SK-N-SH (cell line): ENCODE measurements at regions of chr2 and their contacts with region 1.

Region 1: GRCh38 chr2:241315093-241315878 is at the start of gene HDLBP:
- DNase-seq: peak; percentile 99
- H3K4me3 ChIP-seq: peak within 1 kb of the TSS; percentile 96 to 97
- H3K27ac ChIP-seq: peak within 1 kb of the TSS; percentile 99 to 100
- H3K4me1 ChIP-seq: peaks cover 22 to 25% of the 10 kb centered on the region in 2 experiments; a peak in 3 of 4 replicates
- H3K27me3 ChIP-seq: no peaks in the 10 kb centered on the region
- CTCF ChIP-seq: peak; percentile 60
- EP300 ChIP-seq: 0 out of 4 replicates have a peak, but pooled peaks of 1 of the 2 experiments have one; percentile 19
- RAD21 ChIP-seq: peak; percentile 19; the same call in 1 of the 2 replicates
- polyA plus RNA-seq, gene HDLBP: 211 and 263 TPM in 2 replicates

Region 2: DNA sequence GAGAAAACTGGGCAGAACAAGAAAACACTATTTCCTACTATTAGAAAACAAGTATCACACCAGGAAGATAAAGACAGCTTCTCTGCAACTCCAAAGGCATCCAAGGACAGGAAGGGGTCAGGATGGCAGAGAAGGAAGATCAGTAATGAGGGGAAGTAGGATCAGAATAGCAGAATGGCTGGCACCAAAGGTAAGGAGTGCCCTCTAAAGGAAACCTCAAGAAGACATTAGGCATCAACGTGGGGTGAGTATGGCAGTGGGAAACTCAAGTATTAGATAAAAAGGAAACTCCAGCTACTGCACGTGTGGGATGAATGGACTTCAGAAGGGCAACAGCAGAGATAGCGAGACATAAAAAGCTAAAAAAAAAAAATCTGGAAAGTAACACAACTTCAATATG is 25.7 kb before region 1 on chr2:
- CTCF ChIA-PET with region 1: interaction called, 29 read pairs
- POLR2A ChIA-PET with region 1: interaction called, 5 read pairs
- DNase-seq: no peak
- H3K4me3 ChIP-seq: no peak overlapping the region
- H3K27ac ChIP-seq: no peak overlapping the region
- H3K4me1 ChIP-seq: peaks cover 5 to 10% of the 10 kb centered on the region in 2 experiments; a peak in 2 of 4 replicates
- H3K27me3 ChIP-seq: no peaks in the 10 kb centered on the region
- CTCF ChIP-seq: peak; percentile 11; the same call in 1 of the 2 replicates
- EP300 ChIP-seq: no peak
- RAD21 ChIP-seq: no peak

Region 3: GRCh38 chr2:241302759-241303651 is 12.3 kb before region 1 on chr2:
- CTCF ChIA-PET with region 1: interaction called, 22 read pairs
- POLR2A ChIA-PET with region 1: interaction called, 24 read pairs
- DNase-seq: peak; percentile 14
- H3K4me3 ChIP-seq: no peak overlapping the region
- H3K27ac ChIP-seq: peak overlapping the region in 1 of 2 experiments; percentile 85; a peak in 2 of 4 replicates
- H3K4me1 ChIP-seq: peaks cover 0 to 36% of the 10 kb centered on the region in 2 experiments; a peak in 1 of 4 replicates
- H3K27me3 ChIP-seq: no peaks in the 10 kb centered on the region
- CTCF ChIP-seq: no peak
- EP300 ChIP-seq: no peak
- RAD21 ChIP-seq: no peak

Region 4: DNA sequence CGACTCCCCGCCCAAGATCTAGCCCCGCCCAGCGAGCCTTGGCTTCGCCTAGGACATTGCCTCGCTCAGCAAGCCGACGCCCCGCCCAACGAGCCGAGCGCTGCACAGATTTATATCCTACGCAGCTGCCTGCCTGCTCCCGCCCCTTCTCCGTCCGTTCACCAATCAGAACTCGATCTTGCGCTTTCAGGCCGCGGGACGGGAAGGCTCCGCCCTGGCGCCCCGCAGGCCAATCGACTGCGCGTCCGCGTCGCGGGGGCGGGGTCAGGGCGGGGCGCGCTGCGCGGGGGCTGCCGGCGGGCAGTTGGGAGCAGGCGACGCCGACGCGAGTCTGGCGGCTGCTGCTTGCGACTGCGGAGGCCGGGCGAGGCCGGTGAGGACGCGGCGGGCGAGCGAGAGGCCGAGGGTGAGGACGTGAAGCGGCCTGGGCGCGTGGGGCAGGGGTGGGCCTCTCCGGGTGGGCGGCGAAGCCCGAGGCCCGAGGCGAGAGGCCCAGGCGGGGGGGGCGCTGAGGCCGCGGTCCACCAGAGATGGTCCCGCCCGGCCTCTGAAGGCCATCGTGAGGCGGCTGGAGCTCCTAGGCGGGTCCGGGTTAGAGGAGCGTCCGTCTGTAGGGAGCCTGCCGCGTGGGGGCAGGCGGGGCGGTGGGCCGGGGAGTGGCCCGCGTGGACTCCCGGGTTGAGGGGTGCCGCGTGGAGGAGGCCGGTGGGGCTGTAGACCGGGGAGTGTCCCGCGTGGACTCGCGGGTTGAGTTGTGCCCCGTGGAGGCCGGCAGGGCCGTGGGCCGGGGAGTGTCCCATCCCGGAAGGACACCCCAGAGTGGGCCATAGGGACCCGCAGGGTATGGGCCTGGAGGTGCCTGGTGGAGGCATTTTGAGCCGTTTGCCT is 40.9 kb after region 1 on chr2 and contains the start of gene FARP2:
- CTCF ChIA-PET with region 1: no interaction called
- POLR2A ChIA-PET with region 1: no interaction called
- DNase-seq: peak; percentile 95
- H3K4me3 ChIP-seq: peak within 1 kb of the TSS; percentile 73 to 97
- H3K27ac ChIP-seq: peak within 1 kb of the TSS; percentile 59 to 72
- H3K4me1 ChIP-seq: peaks cover 0 to 13% of the 10 kb centered on the region in 2 experiments; a peak in 3 of 4 replicates
- H3K27me3 ChIP-seq: no peaks in the 10 kb centered on the region
- CTCF ChIP-seq: no peak
- EP300 ChIP-seq: no peak
- RAD21 ChIP-seq: no peak
- polyA plus RNA-seq, gene FARP2: 11.5 and 13.9 TPM in 2 replicates

Region 5: DNA sequence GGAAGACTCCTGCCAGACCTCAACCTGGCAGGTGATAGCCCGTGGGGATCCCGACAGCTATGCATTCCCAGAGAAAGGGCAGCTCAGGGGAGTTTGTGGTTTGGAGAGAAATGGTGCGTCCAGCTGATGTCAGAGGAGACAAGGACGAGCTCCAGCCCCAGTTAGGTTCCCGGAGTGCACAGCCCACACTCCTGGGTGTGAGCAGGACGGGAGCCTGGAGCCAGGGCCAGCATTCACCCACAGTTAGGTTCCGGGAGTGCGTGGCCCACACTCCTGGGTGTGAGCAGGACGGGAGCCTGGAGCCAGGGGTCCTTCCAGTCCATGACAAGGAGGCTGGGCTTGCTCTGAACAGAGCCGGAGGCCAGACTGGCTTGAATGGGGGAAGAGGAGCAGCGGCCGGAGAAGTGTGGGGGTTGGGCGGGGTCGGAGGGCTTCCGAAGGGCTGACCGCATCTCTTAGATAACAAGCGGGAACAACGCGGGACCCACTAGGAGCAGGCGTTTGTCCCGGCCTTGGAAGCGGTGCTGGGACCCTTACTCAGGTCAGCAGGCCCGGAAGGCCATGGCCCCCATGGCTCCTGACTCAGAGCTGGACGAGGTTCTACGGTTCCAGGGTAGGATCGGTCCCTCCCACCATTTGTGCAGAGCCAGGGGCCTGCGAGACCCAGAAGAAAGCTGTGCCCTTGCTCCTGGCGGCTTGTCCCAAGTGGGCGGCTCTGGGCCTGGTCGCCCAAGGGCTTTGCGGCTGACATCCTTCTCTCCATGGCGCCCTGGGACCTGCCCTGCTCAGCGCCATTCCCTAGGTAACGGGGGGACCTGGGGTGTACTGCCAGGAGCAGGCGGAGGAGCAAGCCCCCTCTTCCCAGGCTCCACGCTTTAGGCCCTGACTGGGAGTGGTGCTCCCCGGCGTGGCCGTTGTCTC is 739.9 kb after region 1 on chr2:
- CTCF ChIA-PET with region 1: no interaction called
- POLR2A ChIA-PET with region 1: no interaction called
- DNase-seq: no peak
- H3K4me3 ChIP-seq: no peak overlapping the region
- H3K27ac ChIP-seq: no peak overlapping the region
- H3K4me1 ChIP-seq: no peaks in the 10 kb centered on the region
- H3K27me3 ChIP-seq: peaks cover 20% of the 10 kb centered on the region
- CTCF ChIP-seq: no peak
- EP300 ChIP-seq: no peak
- RAD21 ChIP-seq: no peak